ENCODE measurements at regions of chr12 and their contacts with region 1.

Region 1: GRCh38 chr12:124567661-124568373 is 405 bp upstream of the NCOR2 start:
- DNase-seq: peak; percentile 95 to 98 (median 97)
- H3K4me3 ChIP-seq: peak overlapping the region; percentile 36
- H3K27ac ChIP-seq: peak overlapping the region; percentile 73 to 83
- H3K4me1 ChIP-seq: peaks cover 22% of the 10 kb centered on the region
- H3K27me3 ChIP-seq: no peaks in the 10 kb centered on the region
- CTCF ChIP-seq: peak in 1 of 3 donors; percentile 12
- EP300 ChIP-seq: no peak
- POLR2A ChIP-seq: no peak

Region 2: GRCh38 chr12:124359671-124360581 is 207.9 kb before region 1 on chr12:
- intact Hi-C with region 1: loop called in 1 of 4 experiments (anchors 10 kb)
- DNase-seq: peak; percentile 85 to 97 (median 89)
- H3K4me3 ChIP-seq: no peak overlapping the region
- H3K27ac ChIP-seq: peak overlapping the region in 1 of 2 donors; percentile 16
- H3K4me1 ChIP-seq: peaks cover 7% of the 10 kb centered on the region
- H3K27me3 ChIP-seq: no peaks in the 10 kb centered on the region
- CTCF ChIP-seq: peak in 1 of 3 donors; percentile 7
- EP300 ChIP-seq: no peak
- POLR2A ChIP-seq: no peak

Region 3: GRCh38 chr12:124388679-124389536 is 178.9 kb before region 1 on chr12:
- intact Hi-C with region 1: loop called in 2 of 4 experiments (anchors 5 to 10 kb)
- DNase-seq: peak; percentile 84 to 93 (median 91)
- H3K4me3 ChIP-seq: peak overlapping the region; percentile 47
- H3K27ac ChIP-seq: peak overlapping the region; percentile 58 to 83
- H3K4me1 ChIP-seq: peaks cover 27% of the 10 kb centered on the region
- H3K27me3 ChIP-seq: no peaks in the 10 kb centered on the region
- CTCF ChIP-seq: peak in 1 of 3 donors; percentile 15
- EP300 ChIP-seq: no peak
- POLR2A ChIP-seq: peak; percentile 23

Region 4: DNA sequence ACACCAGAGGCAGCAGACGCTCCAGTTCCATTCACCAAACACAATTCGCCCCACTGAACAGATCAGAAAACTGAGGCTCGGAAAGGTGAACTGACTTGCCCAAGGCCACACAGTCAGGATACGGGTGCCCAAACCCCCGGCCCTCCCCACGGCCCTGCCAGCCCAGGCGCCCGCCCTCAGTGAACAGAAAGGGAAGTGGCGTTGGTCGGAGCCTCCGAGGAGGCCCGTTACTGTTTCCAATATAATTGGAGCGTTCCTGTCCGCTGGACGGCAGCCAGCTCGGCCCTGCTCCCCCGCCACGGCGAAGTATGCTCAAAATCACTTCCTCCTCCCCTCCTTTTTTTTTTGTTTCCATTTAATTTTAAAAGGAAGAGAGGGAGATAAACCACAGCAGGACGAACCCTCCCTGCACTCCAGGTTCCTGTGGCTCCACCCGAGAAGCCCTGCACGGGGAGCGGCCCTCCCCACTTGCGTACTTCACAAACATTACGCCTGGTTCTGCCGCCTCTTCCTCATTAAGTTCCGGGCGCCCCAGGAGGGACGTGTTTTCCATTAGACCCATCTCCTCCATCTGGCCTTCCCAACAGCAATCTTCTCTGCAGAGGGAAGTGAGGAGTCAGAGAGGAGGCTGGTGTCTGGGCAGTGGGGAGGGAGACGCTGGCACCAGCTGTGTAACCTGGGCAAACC is 61.5 kb before region 1 on chr12:
- intact Hi-C with region 1: loop called in 2 of 4 experiments (anchors 10 kb)
- DNase-seq: peak; percentile 88 to 96 (median 92)
- H3K4me3 ChIP-seq: no peak overlapping the region
- H3K27ac ChIP-seq: peak overlapping the region; percentile 56 to 71
- H3K4me1 ChIP-seq: peaks cover 46% of the 10 kb centered on the region
- H3K27me3 ChIP-seq: no peaks in the 10 kb centered on the region
- CTCF ChIP-seq: no peak
- EP300 ChIP-seq: no peak
- POLR2A ChIP-seq: peak; percentile 19

Region 5: GRCh38 chr12:124620751-124621660 is 53.2 kb after region 1 on chr12:
- intact Hi-C with region 1: loop called in 1 of 4 experiments (anchors 5 kb)
- DNase-seq: peak; percentile 74 to 88 (median 82)
- H3K4me3 ChIP-seq: no peak overlapping the region
- H3K27ac ChIP-seq: peak overlapping the region; percentile 32 to 72
- H3K4me1 ChIP-seq: peaks cover 20% of the 10 kb centered on the region
- H3K27me3 ChIP-seq: no peaks in the 10 kb centered on the region
- CTCF ChIP-seq: no peak
- EP300 ChIP-seq: no peak
- POLR2A ChIP-seq: no peak

Region 6: DNA sequence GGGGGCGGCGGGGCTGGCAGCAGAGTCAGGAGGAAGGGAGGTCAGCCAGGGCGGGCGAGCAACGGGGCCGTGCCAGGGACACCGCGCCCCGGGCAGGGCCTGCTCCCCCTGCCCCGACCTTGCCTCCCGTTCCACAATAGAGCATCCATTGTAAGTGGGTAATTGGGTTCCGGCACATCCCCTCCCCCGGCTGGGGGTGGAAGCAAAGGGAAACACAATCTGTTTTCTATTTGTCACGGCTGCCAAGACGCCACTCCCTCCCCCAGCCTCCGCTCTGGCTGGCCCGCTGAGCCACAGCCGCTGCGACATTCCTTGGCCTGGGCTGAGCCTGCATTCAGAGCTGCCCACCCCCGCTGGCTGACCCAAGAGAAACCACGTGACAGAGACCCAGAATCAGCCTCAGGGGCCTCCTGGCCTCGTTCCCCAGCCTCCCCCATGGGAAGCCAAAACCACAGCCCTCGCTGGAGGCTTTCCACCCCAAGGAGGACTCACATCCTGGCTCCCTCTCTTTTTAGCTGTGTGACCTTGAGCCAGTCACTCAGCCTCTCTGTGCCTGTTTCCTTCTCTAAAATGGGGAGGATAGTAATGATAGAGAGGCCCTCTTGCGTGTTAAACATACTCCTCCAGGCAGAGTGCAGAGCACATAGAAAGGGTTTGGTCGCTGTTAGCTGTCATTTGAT is 178.2 kb after region 1 on chr12:
- intact Hi-C with region 1: loop called in 1 of 4 experiments (anchors 5 kb)
- DNase-seq: peak; percentile 92 to 95 (median 94)
- H3K4me3 ChIP-seq: no peak overlapping the region
- H3K27ac ChIP-seq: peak overlapping the region in 1 of 2 donors; percentile 78
- H3K4me1 ChIP-seq: peaks cover 12% of the 10 kb centered on the region
- H3K27me3 ChIP-seq: no peaks in the 10 kb centered on the region
- CTCF ChIP-seq: peak in 1 of 3 donors; percentile 16
- EP300 ChIP-seq: peak; percentile 47
- POLR2A ChIP-seq: no peak

Measured in ovary (tissue), 10 donors.